ENCODE measurements at regions of chr3 and their contacts with region 1.

Region 1: DNA sequence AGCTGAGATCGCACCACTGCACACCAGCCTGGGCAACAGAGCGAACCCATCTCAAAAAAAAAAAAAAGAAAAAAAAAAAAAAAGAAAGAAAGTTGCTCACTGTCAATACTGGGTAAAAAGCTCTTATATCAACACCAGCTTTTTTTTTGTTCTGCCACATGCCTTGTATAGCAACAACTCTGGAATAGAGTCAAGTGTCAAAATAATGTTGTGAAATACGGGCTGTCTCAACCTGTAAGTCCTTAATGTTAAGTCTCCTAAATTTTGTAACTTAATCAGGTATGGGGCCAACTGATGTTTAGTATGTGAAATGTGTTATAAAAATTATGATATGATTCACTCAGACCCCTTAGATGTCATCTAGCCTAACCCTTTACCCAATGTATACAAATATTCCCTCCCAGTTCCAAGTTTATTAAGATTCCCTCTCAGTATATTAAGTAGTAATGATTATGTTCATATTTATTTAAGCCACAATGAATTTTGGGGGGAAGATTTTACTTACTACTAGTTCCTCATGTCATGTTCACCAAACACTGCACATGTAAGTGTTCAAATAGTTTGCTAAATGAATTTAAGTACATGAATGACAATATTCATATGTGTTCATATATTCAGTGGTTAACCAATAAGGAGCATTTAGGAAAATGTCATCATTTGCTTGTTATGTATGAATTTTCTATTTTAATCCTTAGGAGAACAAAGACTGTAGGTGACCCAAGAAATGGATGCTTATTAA is 52.2 kb downstream of the GPR160 start:
- DNase-seq: no peak
- H3K4me3 ChIP-seq: no peak overlapping the region
- H3K27ac ChIP-seq: no peak overlapping the region
- H3K4me1 ChIP-seq: no peaks in the 10 kb centered on the region
- H3K27me3 ChIP-seq: no peaks in the 10 kb centered on the region
- CTCF ChIP-seq: no peak

Region 2: DNA sequence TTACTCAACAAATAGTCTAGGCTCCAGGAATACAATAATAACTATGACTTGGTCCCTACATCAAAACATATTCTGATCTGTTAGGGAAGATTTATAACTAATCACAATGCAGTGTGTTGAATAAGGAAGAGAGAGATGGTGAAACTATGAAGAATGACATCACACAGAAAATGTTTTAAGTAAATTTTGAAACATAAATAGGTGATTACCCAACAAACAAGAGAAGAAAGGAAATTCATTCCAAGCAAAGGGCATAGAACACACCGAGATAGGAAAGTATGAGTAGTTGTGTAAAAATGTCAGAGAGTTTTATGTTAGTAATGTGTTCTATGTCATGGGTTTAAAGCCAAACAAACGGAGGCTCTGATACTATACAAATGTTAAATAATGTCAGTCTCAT is 110.0 kb before region 1 on chr3:
- intact Hi-C with region 1: loop called (anchors 10 kb)
- DNase-seq: no peak
- H3K4me3 ChIP-seq: no peak overlapping the region
- H3K27ac ChIP-seq: no peak overlapping the region
- H3K4me1 ChIP-seq: no peaks in the 10 kb centered on the region
- H3K27me3 ChIP-seq: no peaks in the 10 kb centered on the region
- CTCF ChIP-seq: no peak

Region 3: DNA sequence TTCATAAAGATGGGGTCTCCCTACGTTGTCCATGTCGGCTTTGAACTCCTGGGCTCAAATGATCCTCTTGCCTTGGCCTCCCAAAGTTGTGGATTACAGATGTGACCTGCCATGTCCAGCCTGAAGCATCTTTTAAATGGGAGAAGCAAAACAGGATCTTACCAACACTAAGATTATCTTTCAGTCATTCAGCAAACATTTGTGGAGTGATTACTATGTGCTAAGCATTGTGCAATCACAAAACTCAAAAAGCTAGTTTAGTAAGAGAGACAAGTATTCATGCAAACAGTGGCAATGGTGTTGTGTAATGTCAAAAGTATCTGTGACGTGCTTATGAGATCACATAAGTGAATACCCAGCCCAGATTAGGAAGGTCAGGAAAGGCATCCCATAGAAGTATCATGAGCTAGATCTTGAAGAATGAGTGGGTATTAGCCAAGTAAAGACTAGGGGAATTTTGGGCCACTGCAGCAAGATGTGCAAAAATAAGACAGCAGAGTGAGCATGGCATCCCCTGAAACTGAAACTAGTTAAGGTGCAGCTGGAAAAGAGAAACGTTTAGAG is 91.4 kb before region 1 on chr3:
- intact Hi-C with region 1: no loop called
- DNase-seq: no peak
- H3K4me3 ChIP-seq: no peak overlapping the region
- H3K27ac ChIP-seq: no peak overlapping the region
- H3K4me1 ChIP-seq: peaks cover 27% of the 10 kb centered on the region
- H3K27me3 ChIP-seq: no peaks in the 10 kb centered on the region
- CTCF ChIP-seq: no peak